Thyroid gland (tissue), 4 donors: ENCODE measurements at regions of chr7 and their contacts with region 1.

Region 1: DNA sequence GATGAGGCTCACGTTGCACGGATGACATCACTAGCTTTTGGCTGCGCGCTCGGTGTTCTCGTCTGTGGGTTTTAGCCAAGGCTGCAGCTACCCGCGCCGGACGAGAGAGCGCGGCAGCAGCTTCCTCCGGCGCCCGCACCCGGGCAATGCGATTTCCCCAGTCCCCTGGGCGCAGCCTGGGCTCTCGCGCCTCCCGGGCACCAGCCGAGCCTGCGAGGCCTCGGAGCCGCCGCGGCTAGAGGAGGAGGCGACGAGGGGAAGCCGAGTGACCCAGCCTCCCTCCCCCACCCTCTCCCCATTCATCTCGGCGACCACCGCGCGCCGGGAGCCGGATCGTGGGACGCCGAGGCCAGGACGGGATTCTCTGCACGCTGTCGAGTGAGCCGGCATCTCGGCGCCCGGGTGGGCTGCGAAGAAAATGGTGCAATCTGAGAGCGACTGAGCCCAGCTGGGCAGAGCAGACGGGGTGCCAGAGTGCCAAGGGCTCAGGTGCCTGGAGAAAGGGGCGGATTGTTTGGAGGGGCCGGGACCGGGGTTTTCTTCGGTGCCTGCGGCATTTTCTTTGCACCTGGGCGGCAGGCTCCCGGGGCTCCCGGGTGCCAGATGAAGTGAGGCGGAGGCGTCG is 1.2 kb upstream of the TMEM178B start:
- DNase-seq: peak; percentile 87
- H3K4me3 ChIP-seq: peak overlapping the region; percentile 66 to 71 (median 67)
- H3K27ac ChIP-seq: peak overlapping the region; percentile 33 to 85 (median 64)
- H3K4me1 ChIP-seq: peaks cover 0 to 14% of the 10 kb centered on the region in 2 donors
- H3K27me3 ChIP-seq: no peaks in the 10 kb centered on the region
- CTCF ChIP-seq: no peak
- POLR2A ChIP-seq: peak in 1 of 2 donors; percentile 83

Region 2: DNA sequence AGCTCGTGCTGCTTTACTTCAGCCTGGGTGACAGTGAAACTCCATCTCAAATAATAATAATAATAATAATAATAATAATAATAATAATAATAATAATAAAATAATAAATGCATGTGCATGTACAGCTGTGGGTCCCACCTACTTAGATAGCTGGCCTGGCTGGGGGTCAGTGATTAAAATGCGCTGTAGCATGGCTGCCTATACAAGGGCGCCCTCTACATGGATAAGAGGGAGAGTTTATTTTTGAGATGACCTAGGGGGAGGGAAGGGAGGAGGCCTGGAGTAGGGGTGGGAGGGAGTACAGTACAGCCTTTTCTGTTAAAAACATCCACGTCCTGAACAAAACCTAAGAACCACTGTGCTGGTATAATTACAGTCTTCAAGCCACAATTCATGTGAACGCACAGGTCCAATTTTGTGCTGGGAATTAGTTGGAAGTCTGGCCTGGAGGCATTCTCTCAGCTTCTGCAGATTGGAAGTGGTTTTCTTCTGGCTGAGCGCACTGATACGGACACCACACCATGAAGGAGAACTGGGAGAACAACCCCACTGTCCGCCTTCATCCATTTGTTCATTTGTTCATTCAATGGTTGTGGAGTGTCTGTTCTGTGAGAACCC is 147.7 kb after region 1 on chr7:
- intact Hi-C with region 1: loop called (anchors 10 kb)
- DNase-seq: peak in 1 of 2 donors; percentile 22
- H3K4me3 ChIP-seq: no peak overlapping the region
- H3K27ac ChIP-seq: no peak overlapping the region
- H3K4me1 ChIP-seq: peaks cover 0 to 14% of the 10 kb centered on the region in 2 donors
- H3K27me3 ChIP-seq: no peaks in the 10 kb centered on the region
- CTCF ChIP-seq: peak in 4 of 6 experiments; percentile 16 to 49 (median 38)
- POLR2A ChIP-seq: no peak